ENCODE measurements at regions of chr2 and their contacts with region 1.

Region 1: GRCh38 chr2:215722986-215723630 is 287.2 kb upstream of the FN1 start:
- DNase-seq: no peak
- H3K4me3 ChIP-seq: no peak overlapping the region
- H3K27ac ChIP-seq: no peak overlapping the region
- H3K4me1 ChIP-seq: no peaks in the 10 kb centered on the region
- H3K27me3 ChIP-seq: no peaks in the 10 kb centered on the region
- CTCF ChIP-seq: no peak
- POLR2A ChIP-seq: no peak

Region 2: GRCh38 chr2:215396595-215397313 is 326.4 kb before region 1 on chr2:
- intact Hi-C with region 1: no loop called
- DNase-seq: no peak
- H3K4me3 ChIP-seq: no peak overlapping the region
- H3K27ac ChIP-seq: no peak overlapping the region
- H3K4me1 ChIP-seq: no peaks in the 10 kb centered on the region
- H3K27me3 ChIP-seq: no peaks in the 10 kb centered on the region
- CTCF ChIP-seq: no peak
- POLR2A ChIP-seq: no peak

Region 3: DNA sequence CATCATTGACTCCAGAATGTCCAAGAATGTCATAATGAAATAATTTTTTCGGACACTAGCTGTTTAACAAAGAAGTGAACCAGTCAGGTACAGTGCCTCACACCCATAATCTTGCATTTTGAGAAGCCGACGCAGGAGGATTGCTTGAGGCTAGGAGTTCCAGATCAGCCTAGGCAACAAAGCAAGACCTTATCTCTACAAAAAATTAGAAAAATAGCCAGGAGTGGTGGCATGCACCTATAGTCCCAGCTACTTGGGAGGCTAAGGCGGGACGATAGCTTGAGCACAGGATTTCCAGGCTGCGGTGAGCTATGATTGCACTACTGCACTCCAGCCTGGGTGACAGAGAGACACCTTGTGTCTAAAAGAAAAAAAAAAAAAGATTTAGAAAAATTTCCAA is 51.4 kb before region 1 on chr2:
- intact Hi-C with region 1: loop called (anchors 2 kb)
- DNase-seq: no peak
- H3K4me3 ChIP-seq: no peak overlapping the region
- H3K27ac ChIP-seq: no peak overlapping the region
- H3K4me1 ChIP-seq: no peaks in the 10 kb centered on the region
- H3K27me3 ChIP-seq: no peaks in the 10 kb centered on the region
- CTCF ChIP-seq: no peak
- POLR2A ChIP-seq: no peak

Measured in breast epithelium (tissue), 4 donors.